Left ventricle myocardium inferior (tissue), 1 donor: ENCODE measurements at regions of chr2 and their contacts with region 1.

Region 1: DNA sequence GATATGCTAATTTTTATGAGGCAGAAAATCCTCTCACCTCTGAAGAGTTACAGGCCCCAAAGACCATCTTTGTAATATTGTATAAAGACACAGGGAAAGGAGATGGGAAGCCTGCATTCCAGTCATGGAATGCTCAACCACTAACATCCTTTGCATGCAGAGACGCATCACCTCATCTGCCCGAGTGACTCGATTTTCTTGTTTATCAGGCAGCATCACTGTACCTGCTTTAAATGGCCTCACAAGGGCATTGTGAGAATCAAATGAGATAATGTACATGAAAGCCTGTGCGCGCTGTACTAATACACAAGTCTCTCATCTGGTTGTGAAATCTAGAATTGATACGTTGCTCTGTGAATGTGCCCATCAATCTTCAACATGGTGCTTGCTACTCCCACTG is 10.2 kb upstream of the TMEM247 start:
- DNase-seq: no peak
- H3K4me3 ChIP-seq: no peak overlapping the region
- H3K27ac ChIP-seq: no peak overlapping the region
- H3K4me1 ChIP-seq: peaks cover 9% of the 10 kb centered on the region
- H3K27me3 ChIP-seq: no peaks in the 10 kb centered on the region
- CTCF ChIP-seq: no peak

Region 2: GRCh38 chr2:46410273-46411247 is 58.6 kb before region 1 on chr2:
- intact Hi-C with region 1: no loop called
- DNase-seq: no peak
- H3K4me3 ChIP-seq: no peak overlapping the region
- H3K27ac ChIP-seq: peak overlapping the region; percentile 84
- H3K4me1 ChIP-seq: peaks cover 23% of the 10 kb centered on the region
- H3K27me3 ChIP-seq: no peaks in the 10 kb centered on the region
- CTCF ChIP-seq: no peak

Region 3: DNA sequence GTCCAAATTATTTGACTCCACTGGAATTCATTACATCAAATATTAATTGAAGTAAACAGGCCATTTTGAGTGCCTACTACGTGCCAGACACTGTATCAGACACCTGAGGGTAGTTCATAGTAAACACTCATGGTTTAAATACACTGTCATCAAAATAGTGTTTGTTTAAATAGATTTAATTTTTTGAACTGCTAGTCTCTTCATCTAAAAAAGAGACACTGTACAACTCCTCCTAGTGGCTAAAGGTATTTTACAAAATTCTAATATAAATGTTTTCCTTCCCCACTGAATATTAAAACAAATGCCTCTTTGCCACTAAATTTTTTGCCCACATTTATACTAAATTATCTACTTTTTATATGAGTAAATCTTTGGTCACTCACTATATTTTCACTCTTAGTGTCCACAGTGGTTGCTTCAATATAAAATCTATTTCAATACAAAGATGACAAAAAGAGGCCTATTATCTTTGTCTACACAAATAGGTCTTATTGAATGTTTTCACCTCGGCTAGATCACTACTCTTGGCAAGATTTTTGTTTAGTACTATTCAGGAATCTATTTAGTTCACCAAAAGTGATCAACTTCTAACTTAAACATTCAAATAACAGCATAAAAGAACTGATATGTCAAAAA is 132.3 kb after region 1 on chr2:
- intact Hi-C with region 1: loop called (anchors 5 kb)
- DNase-seq: no peak
- H3K4me3 ChIP-seq: no peak overlapping the region
- H3K27ac ChIP-seq: no peak overlapping the region
- H3K4me1 ChIP-seq: no peaks in the 10 kb centered on the region
- H3K27me3 ChIP-seq: no peaks in the 10 kb centered on the region
- CTCF ChIP-seq: peak; percentile 61